T-cell (primary cell): ENCODE measurements at regions of chr1 and their contacts with region 1.

Region 1: DNA sequence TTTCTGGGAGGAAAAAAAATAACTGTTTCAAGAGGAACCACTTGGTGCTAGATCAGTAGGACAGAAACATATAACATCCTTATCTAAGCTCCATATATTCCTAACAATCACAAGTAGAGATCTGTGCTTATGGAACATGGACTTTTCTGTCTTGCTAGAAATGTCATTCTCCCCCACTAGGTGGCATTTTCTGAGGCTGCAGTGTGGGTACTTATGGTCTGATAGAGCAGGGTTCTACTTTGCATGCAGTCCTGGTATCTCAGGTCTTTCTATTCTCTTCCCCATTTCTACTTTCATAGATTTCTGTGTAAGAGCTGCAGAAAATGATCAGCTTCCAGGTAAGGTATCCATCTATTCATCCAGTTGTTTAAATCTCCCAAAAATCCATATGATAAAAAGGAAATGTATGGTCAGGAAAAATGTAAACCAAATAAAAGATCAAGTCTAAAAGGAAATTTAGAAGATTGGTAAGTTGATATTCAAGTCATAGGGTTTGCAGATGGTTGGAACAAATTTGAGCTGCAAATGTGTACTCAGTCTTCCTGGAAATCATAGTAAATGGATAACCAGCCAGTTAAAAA is 1.5 kb downstream of the ZNF684 start:
- DNase-seq: peak in 9 of 35 experiments; percentile 1 to 58 (median 8)
- ATAC-seq: no peak
- H3K4me3 ChIP-seq: no peak overlapping the region
- H3K4me3 Mint-ChIP-seq: peak overlapping the region; percentile 29 to 87 (median 47)
- H3K27ac ChIP-seq: no peak overlapping the region
- H3K27ac Mint-ChIP-seq: no peak overlapping the region
- H3K4me1 ChIP-seq: peaks cover 7 to 13% of the 10 kb centered on the region in 2 experiments
- H3K4me1 Mint-ChIP-seq: peaks cover 24 to 28% (median 25%) of the 10 kb centered on the region in 3 donors
- H3K27me3 ChIP-seq: no peaks in the 10 kb centered on the region
- H3K27me3 Mint-ChIP-seq: peaks cover 0 to 3% of the 10 kb centered on the region in 2 donors

Region 2: GRCh38 chr1:40197656-40198055 is 335.3 kb before region 1 on chr1:
- CTCF ChIA-PET with region 1: interaction called in 1 of 2 experiments, 12 read pairs
- POLR2A ChIA-PET with region 1: no interaction called
- DNase-seq: peak in 2 of 35 experiments; percentile 11 to 26
- ATAC-seq: no peak
- H3K4me3 ChIP-seq: no peak overlapping the region
- H3K4me3 Mint-ChIP-seq: no peak overlapping the region
- H3K27ac ChIP-seq: no peak overlapping the region
- H3K27ac Mint-ChIP-seq: no peak overlapping the region
- H3K4me1 ChIP-seq: no peaks in the 10 kb centered on the region
- H3K4me1 Mint-ChIP-seq: peaks cover 0 to 3% (median 0%) of the 10 kb centered on the region in 3 donors
- H3K27me3 ChIP-seq: no peaks in the 10 kb centered on the region
- H3K27me3 Mint-ChIP-seq: no peaks in the 10 kb centered on the region

Region 3: GRCh38 chr1:40736085-40736531 is 203.2 kb after region 1 on chr1:
- CTCF ChIA-PET with region 1: no interaction called
- POLR2A ChIA-PET with region 1: interaction called in 1 of 2 experiments, 15 read pairs
- DNase-seq: no peak
- ATAC-seq: no peak
- H3K4me3 ChIP-seq: no peak overlapping the region
- H3K4me3 Mint-ChIP-seq: no peak overlapping the region
- H3K27ac ChIP-seq: no peak overlapping the region
- H3K27ac Mint-ChIP-seq: peak overlapping the region in 1 of 2 donors; percentile 28
- H3K4me1 ChIP-seq: peaks cover 0 to 3% of the 10 kb centered on the region in 2 experiments
- H3K4me1 Mint-ChIP-seq: peaks cover 49 to 57% (median 54%) of the 10 kb centered on the region in 3 donors
- H3K27me3 ChIP-seq: no peaks in the 10 kb centered on the region
- H3K27me3 Mint-ChIP-seq: no peaks in the 10 kb centered on the region